PC-3 (cell line): ENCODE measurements at regions of chr2 and their contacts with region 1.

Region 1: GRCh38 chr2:10493636-10494281 is 45.6 kb upstream of the ODC1 start:
- DNase-seq: peak; percentile 99
- ATAC-seq: peak; percentile 85
- H3K4me3 ChIP-seq: no peak overlapping the region
- H3K27ac ChIP-seq: peak overlapping the region; percentile 97
- H3K4me1 ChIP-seq: peaks cover 30% of the 10 kb centered on the region
- H3K27me3 ChIP-seq: no peaks in the 10 kb centered on the region
- CTCF ChIP-seq: no peak

Region 2: DNA sequence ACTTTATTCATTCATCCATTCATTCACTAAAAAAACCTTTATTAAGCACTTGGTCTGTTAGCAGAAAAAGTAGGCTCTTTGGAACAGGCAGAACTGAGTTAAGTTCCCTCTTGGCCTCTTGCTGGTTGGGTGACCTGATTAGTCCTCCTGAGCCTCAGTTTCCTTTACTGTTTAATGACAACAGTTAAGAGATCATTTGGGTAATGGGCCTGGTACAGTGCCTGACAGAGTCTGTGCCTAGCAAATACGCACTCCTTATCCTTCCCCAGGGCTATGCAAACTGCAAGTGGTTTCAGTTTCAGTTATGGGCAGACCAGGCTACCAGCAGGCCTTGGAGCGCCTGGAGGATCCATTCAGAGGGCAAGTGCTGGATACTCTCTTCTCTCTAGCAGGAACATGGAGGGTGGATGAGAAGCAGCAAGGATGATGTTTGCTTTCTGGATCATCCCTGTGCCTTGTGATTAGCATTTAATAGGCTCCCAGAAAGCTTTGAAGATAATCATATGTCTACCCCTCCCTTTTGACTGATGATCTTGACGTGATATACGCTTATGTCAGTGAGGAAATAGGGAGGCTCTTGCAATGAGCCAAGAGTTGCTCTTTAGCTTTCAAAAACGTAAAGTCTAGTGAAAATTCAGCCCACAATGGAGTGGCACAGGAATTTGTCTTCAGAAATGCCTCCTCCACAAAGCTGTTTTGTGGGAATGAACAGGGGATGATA is 662.9 kb before region 1 on chr2:
- CTCF ChIA-PET with region 1: no interaction called
- POLR2A ChIA-PET with region 1: no interaction called
- intact Hi-C with region 1: no loop called
- DNase-seq: no peak
- ATAC-seq: peak; percentile 43; the same call in 1 of the 2 replicates
- H3K4me3 ChIP-seq: peak overlapping the region; percentile 53
- H3K27ac ChIP-seq: peak overlapping the region; percentile 84
- H3K4me1 ChIP-seq: peaks cover 12% of the 10 kb centered on the region
- H3K27me3 ChIP-seq: no peaks in the 10 kb centered on the region
- CTCF ChIP-seq: no peak

Region 3: DNA sequence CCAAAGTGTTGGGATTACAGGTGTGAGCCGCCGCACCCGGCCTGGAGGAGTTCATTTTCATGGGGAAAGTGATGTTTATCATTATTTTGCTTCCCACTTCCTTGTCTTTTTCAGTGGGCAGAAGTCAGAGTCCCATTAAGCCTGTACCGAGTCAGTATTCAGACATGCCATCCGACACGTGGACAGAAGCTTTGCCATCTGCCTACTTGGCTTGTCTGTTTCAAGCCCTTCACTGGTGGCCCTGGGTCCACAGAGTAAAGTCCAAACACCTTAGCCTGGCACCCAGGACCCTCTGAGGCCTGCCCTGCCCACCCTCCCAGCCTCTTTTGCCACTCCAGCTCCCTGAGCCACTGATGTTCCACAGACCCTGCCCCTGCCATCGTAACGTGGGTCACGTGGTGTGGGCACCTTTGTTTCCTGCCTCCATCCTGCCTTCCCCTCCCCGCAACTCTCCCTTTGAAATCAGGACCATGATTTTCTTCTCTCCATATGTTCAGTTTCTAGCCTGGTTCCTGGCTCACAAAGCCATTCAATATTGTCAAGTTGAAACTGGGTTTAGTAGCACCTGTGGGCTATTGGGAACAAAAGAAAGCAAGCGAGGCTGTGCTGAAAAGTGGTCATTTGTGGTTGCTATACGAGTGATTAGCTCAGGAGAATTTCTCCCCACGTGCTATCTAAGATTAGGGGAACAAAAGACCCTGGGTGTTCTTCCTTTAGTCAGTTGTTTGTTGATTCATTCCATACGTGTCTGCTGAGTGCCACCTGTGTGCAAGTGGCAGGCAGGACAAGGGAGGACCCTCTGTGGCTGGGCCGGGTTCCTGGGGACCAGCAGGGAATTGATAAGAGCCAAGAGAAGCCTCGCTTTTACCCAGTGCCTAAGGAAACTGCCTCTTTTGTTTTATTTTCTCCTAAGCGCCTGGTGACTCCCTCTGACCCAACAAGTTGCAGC is 40.5 kb before region 1 on chr2:
- CTCF ChIA-PET with region 1: interaction called, 4 read pairs
- POLR2A ChIA-PET with region 1: interaction called, 10 read pairs
- intact Hi-C with region 1: loop called (anchors 1 kb)
- DNase-seq: no peak
- ATAC-seq: no peak
- H3K4me3 ChIP-seq: no peak overlapping the region
- H3K27ac ChIP-seq: peak overlapping the region; percentile 62
- H3K4me1 ChIP-seq: peaks cover 60% of the 10 kb centered on the region
- H3K27me3 ChIP-seq: no peaks in the 10 kb centered on the region
- CTCF ChIP-seq: no peak

Region 4: DNA sequence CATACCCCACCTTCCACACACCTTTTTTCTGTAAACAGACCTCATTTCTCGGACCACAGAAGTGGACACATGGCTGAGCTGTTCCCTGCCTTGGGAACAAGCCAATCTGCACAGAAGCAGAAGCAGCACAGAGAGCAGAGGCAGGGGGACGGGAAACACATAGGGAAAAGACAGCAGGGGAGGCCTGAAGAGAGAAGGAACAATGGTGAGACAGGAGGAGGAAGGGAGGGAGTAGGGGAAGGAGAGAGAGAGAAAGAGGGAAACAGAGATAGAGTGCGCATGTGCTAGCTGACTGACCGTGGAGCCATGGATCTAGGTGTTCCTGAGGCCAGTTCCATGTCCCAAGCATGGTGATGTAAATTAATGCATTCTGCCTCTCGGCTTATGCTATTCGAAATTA is 76.3 kb after region 1 on chr2:
- CTCF ChIA-PET with region 1: no interaction called
- POLR2A ChIA-PET with region 1: interaction called, 10 read pairs
- intact Hi-C with region 1: no loop called
- DNase-seq: no peak
- ATAC-seq: no peak
- H3K4me3 ChIP-seq: no peak overlapping the region
- H3K27ac ChIP-seq: no peak overlapping the region
- H3K4me1 ChIP-seq: peaks cover 6% of the 10 kb centered on the region
- H3K27me3 ChIP-seq: no peaks in the 10 kb centered on the region
- CTCF ChIP-seq: no peak

Region 5: DNA sequence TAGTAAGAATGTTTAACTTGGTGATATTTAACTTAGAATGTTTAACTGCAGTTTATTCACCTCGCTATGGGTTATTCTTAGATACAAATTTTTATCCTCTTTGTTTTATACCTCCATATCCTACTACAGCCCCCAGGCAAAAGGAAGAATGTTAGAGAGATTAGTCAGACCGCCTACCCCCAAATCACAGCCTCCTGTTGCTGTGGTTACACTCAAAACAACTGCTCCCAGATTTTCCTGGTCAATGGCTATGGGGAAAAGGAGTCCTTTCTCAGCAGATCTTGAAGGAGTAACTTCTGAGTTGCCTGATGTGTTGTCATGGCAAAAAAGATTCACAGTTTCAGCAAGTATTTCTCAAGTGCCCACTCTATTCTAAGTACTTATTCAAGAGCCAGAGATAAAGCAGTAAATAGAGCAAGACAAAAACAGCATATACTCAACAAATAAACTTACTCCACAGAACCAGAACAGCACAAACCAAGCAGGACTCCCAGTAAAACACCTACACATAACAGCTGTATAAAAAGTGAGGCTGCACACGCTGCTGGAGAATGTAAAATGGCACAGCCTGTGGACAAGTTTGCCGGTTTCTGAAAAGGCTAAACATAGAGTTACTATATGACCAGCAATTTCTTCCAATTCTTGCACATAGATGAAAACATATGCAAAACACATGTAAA is 91.2 kb after region 1 on chr2:
- CTCF ChIA-PET with region 1: no interaction called
- POLR2A ChIA-PET with region 1: no interaction called
- intact Hi-C with region 1: loop called (anchors 1 kb)
- DNase-seq: peak; percentile 97
- ATAC-seq: peak; percentile 84
- H3K4me3 ChIP-seq: peak overlapping the region; percentile 40
- H3K27ac ChIP-seq: peak overlapping the region; percentile 97
- H3K4me1 ChIP-seq: peaks cover 37% of the 10 kb centered on the region
- H3K27me3 ChIP-seq: no peaks in the 10 kb centered on the region
- CTCF ChIP-seq: no peak

Region 6: GRCh38 chr2:10721396-10722251 is 227.9 kb after region 1 on chr2 and contains the start of gene ATP6V1C2:
- CTCF ChIA-PET with region 1: no interaction called
- POLR2A ChIA-PET with region 1: no interaction called
- intact Hi-C with region 1: no loop called
- DNase-seq: peak; percentile 40
- ATAC-seq: peak; percentile 53
- H3K4me3 ChIP-seq: peak within 1 kb of the TSS; percentile 66
- H3K27ac ChIP-seq: no peak within 1 kb of the TSS
- H3K4me1 ChIP-seq: peaks cover 44% of the 10 kb centered on the region
- H3K27me3 ChIP-seq: peaks cover 29% of the 10 kb centered on the region
- CTCF ChIP-seq: no peak
- total RNA-seq, gene ATP6V1C2: 0.40 TPM in 1 of 2 replicates, not detected in the other